ENCODE measurements at regions of chr20 and their contacts with region 1.

Region 1: GRCh38 chr20:9609887-9610502 is 95.6 kb downstream of the LAMP5 start:
- DNase-seq: no peak
- H3K4me3 ChIP-seq: no peak overlapping the region
- H3K27ac ChIP-seq: no peak overlapping the region
- H3K4me1 ChIP-seq: no peaks in the 10 kb centered on the region
- H3K27me3 ChIP-seq: no peaks in the 10 kb centered on the region
- CTCF ChIP-seq: peak; percentile 5 to 69 (median 54)
- EP300 ChIP-seq: no peak
- POLR2A ChIP-seq: no peak

Region 2: DNA sequence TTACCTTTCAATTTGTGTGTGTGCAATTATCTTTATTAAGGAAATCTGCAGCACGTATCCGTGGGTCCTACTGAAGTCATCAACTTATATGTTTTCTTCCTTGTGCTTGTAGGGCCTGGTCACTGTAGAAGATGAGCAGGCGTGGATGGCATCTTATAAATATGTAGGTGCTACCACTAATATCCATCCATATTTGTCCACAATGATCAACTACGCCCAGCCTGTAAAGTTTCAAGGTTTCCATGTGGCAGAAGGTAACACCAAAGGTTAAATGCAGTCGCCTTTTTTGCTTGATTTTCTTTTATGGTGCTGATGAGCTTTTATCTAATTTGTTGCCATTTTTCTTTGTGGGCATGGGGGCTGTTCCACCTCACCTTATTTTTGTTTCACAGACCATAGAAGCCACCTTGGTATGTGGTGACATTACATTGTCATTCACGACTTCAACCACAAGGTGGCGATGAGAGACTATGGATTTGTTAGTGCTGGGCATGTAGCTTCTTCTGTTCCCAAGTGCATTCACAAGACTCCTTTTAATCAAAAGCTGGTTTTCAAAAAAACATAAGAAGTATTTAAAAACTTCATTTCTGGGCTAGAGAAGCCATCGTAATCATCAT is 202.1 kb before region 1 on chr20:
- intact Hi-C with region 1: loop called (anchors 1 kb)
- DNase-seq: no peak
- H3K4me3 ChIP-seq: no peak overlapping the region
- H3K27ac ChIP-seq: no peak overlapping the region
- H3K4me1 ChIP-seq: no peaks in the 10 kb centered on the region
- H3K27me3 ChIP-seq: no peaks in the 10 kb centered on the region
- CTCF ChIP-seq: peak; percentile 67 to 85 (median 76)
- EP300 ChIP-seq: no peak
- POLR2A ChIP-seq: no peak

Region 3: GRCh38 chr20:9930142-9930541 is 320.1 kb after region 1 on chr20:
- intact Hi-C with region 1: no loop called
- DNase-seq: no peak
- H3K4me3 ChIP-seq: no peak overlapping the region
- H3K27ac ChIP-seq: no peak overlapping the region
- H3K4me1 ChIP-seq: no peaks in the 10 kb centered on the region
- H3K27me3 ChIP-seq: no peaks in the 10 kb centered on the region
- CTCF ChIP-seq: no peak
- EP300 ChIP-seq: no peak
- POLR2A ChIP-seq: no peak